ENCODE measurements at regions of chr6 and their contacts with region 1.

Region 1: DNA sequence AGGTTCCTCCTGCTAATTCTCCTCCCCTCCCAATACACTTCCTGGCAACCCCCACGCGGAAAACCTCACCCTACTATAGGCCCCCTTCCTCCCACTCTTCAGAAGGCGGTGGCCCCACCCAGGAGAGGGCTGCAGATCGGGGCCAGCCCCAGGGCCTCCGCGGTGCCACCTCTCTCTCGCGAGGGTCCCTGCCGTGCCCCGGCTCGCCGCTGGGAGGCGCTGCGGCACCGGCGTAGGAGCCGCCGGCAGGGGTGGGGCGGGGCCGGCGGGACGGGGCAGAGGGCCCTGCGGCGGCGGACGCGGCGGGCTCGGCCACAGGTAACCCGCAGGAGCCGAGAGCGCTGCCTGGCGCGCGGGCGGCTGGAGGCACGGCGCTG is at the start of gene ANKRD6:
- DNase-seq: peak; percentile 16 to 90 (median 76)

Region 2: DNA sequence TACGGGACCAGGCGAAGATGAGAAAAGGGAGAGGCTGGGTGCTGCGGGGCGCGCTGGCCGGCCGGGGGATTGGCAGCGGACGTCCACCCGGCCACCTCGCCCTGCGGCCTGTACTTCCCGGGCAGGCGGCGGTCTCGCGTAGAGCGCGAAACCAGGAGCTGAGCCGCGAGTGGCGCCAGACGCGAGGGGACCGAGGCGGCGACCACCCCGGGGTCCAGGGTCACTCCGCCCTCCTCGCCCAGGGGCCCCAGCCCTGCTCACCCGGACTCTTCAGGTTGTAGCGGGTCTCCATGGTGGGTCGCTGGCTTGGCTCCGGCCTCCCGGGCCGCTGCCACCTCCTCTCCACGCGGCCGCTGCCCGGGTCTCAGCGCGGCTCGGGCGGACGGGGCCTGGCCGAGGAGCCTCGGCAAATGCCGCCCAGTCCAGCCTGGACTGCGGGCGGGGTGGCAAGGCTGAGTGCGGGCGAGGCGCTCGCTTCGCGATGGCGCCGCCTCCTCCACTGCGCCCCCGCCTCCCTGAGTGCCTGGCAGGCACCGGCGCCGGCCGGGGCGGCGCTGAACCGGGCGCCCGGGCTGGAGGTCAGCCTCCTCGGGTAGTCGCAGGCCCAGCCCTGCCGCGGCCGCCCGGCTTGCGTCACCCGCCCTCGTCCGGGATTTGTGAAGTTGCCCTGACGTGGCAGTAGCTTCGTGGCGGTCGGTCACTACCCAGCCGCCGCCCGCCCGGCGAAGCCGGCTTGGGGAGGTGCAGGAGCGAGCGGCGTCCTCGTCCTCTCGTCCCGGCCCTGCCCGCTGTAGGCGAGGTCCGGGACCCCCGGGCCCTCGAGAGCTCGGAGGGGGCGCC is 80.4 kb before region 1 on chr6 and contains the start of gene UBE2J1:
- intact Hi-C with region 1: no loop called
- DNase-seq: peak; percentile 63 to 94 (median 88)

Region 3: GRCh38 chr6:89536231-89536630 is 103.4 kb after region 1 on chr6:
- intact Hi-C with region 1: no loop called
- DNase-seq: no peak

Region 4: GRCh38 chr6:89599727-89600126 is 166.9 kb after region 1 on chr6:
- intact Hi-C with region 1: loop called (anchors 10 kb)
- DNase-seq: no peak

Measured in head of caudate nucleus (tissue), 42 donors.